CD4-positive, alpha-beta memory T cell (primary cell): ENCODE measurements at regions of chr11 and their contacts with region 1.

Region 1: GRCh38 chr11:58579192-58580129 is 598 bp downstream of the ZFP91 start:
- DNase-seq: peak; percentile 89 to 94 (median 90)
- H3K4me3 ChIP-seq: peak overlapping the region; percentile 63 to 81
- H3K4me3 Mint-ChIP-seq: peak overlapping the region; percentile 93 to 99 (median 98)
- H3K27ac ChIP-seq: peak overlapping the region; percentile 99
- H3K27ac Mint-ChIP-seq: peak overlapping the region; percentile 98 to 100 (median 100)
- H3K4me1 ChIP-seq: peaks cover 70% of the 10 kb centered on the region
- H3K4me1 Mint-ChIP-seq: peaks cover 37 to 86% (median 58%) of the 10 kb centered on the region in 4 donors
- H3K27me3 ChIP-seq: no peaks in the 10 kb centered on the region
- H3K27me3 Mint-ChIP-seq: peaks cover 0 to 3% of the 10 kb centered on the region in 2 donors

Region 2: DNA sequence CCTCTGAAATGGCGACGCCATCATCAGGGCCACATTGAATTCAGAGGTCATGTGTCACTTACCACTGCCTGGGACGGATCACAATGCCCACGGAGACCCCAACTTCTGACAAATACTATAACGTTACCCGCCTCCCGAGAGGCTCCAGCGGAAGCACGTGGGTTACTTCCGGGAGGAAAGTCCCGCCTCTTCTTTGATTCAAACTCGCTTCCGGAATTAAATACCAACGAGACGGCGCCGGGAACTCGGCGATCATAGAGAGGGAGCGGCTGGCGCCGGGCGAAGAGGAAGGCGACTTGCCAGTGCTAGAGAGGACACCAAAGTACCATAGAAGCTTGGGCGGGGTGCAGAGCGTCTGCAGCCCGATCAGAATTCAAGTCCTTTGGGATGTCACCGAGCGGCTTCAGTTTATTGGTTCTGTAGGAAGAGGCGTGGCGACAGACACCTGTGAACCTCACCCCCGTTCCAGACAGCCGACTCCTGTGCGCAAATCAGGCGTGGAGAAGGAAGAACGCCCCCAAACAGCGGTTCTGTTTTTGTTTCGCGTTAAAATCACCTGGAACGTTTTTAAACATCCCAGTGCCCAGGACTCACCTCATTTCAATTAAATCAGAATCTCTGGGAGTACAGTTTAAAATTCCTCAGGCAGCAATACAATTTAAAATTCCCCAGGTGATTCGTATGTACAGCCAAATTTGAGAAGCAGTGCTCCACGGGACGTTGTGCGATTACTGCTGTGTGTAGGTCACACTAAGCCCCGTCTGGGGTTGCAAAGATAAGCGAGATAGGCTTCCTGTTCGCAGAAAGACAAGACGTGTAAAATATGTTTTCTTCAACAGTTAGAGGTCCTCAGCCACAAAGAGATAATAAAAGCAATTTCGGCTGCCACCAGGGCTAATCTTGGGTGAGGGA is 1048.6 kb before region 1 on chr11 and contains the start of gene TIMM10:
- CTCF ChIA-PET with region 1: no interaction called
- POLR2A ChIA-PET with region 1: no interaction called
- intact Hi-C with region 1: loop called (anchors 1 kb)
- DNase-seq: peak; percentile 93 to 98 (median 96)
- H3K4me3 ChIP-seq: peak within 1 kb of the TSS; percentile 71 to 94
- H3K4me3 Mint-ChIP-seq: peak within 1 kb of the TSS; percentile 88 to 95 (median 90)
- H3K27ac ChIP-seq: peak within 1 kb of the TSS; percentile 88
- H3K27ac Mint-ChIP-seq: peak within 1 kb of the TSS; percentile 92 to 96 (median 95)
- H3K4me1 ChIP-seq: peaks cover 23% of the 10 kb centered on the region
- H3K4me1 Mint-ChIP-seq: peaks cover 9 to 34% (median 26%) of the 10 kb centered on the region in 4 donors
- H3K27me3 ChIP-seq: no peaks in the 10 kb centered on the region
- H3K27me3 Mint-ChIP-seq: no peaks in the 10 kb centered on the region
- total RNA-seq, gene TIMM10: 30.4 to 34.6 TPM

Region 3: DNA sequence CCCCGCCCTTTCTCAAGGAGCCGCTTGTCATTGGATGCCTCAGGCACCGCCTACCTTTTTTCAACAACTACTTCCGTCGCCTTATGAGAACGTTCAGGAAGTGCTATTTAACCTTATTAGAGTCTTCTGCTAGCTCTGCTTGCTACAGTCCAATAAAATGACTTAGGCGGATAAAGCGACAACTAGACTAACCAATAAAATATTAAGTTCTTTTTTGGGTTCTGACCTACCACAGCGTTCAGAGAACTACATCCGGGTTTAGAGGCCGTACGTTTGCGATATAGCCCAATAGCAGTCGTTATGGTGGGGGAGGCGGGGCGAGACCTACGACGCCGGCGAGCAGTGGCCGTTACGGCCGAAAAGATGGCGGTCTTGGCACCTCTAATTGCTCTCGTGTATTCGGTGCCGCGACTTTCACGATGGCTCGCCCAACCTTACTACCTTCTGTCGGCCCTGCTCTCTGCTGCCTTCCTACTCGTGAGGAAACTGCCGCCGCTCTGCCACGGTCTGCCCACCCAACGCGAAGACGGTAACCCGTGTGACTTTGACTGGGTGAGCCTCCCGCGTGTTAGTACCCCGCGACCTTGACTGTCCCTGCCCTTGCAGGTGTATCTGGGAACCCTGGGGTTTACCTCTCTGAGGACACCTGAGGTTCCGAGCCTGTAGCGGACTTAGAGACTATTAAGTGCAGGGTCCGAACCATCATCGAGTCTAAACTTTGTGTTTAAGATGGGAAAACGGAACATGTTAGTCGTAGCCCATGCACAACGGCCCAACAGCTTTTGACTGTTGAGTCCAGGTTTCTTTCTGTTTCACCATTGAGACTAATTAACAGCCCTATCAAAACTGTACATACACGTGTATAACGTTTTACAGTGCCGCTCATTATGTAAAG is 867.0 kb before region 1 on chr11 and contains the start of gene TMX2:
- CTCF ChIA-PET with region 1: no interaction called
- POLR2A ChIA-PET with region 1: interaction called, 3 read pairs
- intact Hi-C with region 1: loop called (anchors 1 kb)
- DNase-seq: peak; percentile 89 to 97 (median 94)
- H3K4me3 ChIP-seq: peak within 1 kb of the TSS; percentile 92 to 96
- H3K4me3 Mint-ChIP-seq: peak within 1 kb of the TSS; percentile 93 to 99 (median 98)
- H3K27ac ChIP-seq: peak within 1 kb of the TSS; percentile 96
- H3K27ac Mint-ChIP-seq: peak within 1 kb of the TSS; percentile 91 to 99 (median 98)
- H3K4me1 ChIP-seq: peaks cover 34% of the 10 kb centered on the region
- H3K4me1 Mint-ChIP-seq: peaks cover 30 to 64% (median 43%) of the 10 kb centered on the region in 4 donors
- H3K27me3 ChIP-seq: no peaks in the 10 kb centered on the region
- H3K27me3 Mint-ChIP-seq: no peaks in the 10 kb centered on the region
- total RNA-seq, gene TMX2: 63.6 to 67.1 TPM

Region 4: DNA sequence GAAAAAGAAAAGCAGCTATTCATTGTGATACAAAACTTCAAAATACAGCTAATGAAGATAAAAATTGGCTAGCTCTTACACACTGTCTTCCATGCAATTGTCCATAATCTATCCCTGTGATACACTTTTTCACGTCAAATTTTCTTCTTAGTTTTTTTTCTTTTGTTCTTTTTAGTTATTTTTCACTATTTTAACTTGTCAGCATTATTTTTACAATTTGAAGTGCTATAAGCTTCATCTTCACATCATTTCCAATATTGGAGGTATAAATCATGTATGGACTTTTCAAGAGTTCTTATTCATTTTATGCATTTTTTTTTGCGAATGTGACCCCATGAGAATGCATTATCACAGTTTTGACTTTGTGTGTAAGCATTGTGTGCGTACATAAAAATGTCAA is 224.7 kb before region 1 on chr11:
- CTCF ChIA-PET with region 1: no interaction called
- POLR2A ChIA-PET with region 1: no interaction called
- intact Hi-C with region 1: no loop called
- DNase-seq: no peak
- H3K4me3 ChIP-seq: no peak overlapping the region
- H3K4me3 Mint-ChIP-seq: no peak overlapping the region
- H3K27ac ChIP-seq: no peak overlapping the region
- H3K27ac Mint-ChIP-seq: no peak overlapping the region
- H3K4me1 ChIP-seq: no peaks in the 10 kb centered on the region
- H3K4me1 Mint-ChIP-seq: no peaks in the 10 kb centered on the region
- H3K27me3 ChIP-seq: no peaks in the 10 kb centered on the region
- H3K27me3 Mint-ChIP-seq: peaks cover 9 to 10% of the 10 kb centered on the region in 2 donors

Region 5: GRCh38 chr11:58562375-58562800 is 17.1 kb before region 1 on chr11:
- CTCF ChIA-PET with region 1: interaction called, 187 read pairs
- POLR2A ChIA-PET with region 1: interaction called, 109 read pairs
- intact Hi-C with region 1: loop called (anchors 2 kb)
- DNase-seq: peak in 4 of 5 donors; percentile 14 to 32 (median 24)
- H3K4me3 ChIP-seq: no peak overlapping the region
- H3K4me3 Mint-ChIP-seq: peak overlapping the region in 7 of 8 donors; percentile 41 to 76 (median 66)
- H3K27ac ChIP-seq: peak overlapping the region; percentile 15
- H3K27ac Mint-ChIP-seq: peak overlapping the region; percentile 41 to 95 (median 85)
- H3K4me1 ChIP-seq: peaks cover 72% of the 10 kb centered on the region
- H3K4me1 Mint-ChIP-seq: peaks cover 44 to 70% (median 48%) of the 10 kb centered on the region in 4 donors
- H3K27me3 ChIP-seq: no peaks in the 10 kb centered on the region
- H3K27me3 Mint-ChIP-seq: no peaks in the 10 kb centered on the region

Region 6: DNA sequence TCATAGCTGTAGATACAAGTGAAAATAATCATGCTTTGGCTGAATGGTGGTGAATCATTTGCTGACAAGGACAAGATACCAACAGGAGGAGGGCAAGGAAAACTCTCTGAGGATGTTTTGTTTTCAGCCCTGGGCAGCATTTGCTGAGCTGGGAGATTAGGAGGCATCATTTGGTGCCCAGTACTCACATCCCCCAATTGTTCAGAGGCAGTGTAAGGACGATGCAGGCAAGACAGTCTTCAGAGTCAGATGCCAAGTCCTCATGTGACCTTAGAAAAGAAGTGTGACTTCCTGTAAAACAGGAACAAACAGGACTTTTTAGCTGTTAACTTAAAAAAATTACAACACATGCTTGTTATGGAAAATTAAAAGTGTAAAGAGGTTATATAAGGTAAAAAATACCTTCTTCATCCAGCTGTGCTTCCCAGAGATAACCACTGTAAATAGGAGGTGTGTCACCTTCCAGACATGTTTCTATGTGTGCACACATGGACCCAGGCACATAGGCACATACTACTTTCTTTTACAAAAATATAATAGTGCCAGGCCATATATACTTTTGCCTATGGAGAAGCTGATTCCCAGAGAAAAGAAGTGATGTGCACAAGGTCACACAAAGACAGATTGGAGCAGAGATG is 61.0 kb after region 1 on chr11:
- CTCF ChIA-PET with region 1: no interaction called
- POLR2A ChIA-PET with region 1: interaction called, 10 read pairs
- intact Hi-C with region 1: no loop called
- DNase-seq: peak in 4 of 5 donors; percentile 16 to 29 (median 21)
- H3K4me3 ChIP-seq: no peak overlapping the region
- H3K4me3 Mint-ChIP-seq: peak overlapping the region in 7 of 8 donors; percentile 26 to 64 (median 33)
- H3K27ac ChIP-seq: no peak overlapping the region
- H3K27ac Mint-ChIP-seq: peak overlapping the region in 6 of 7 donors; percentile 29 to 85 (median 72)
- H3K4me1 ChIP-seq: peaks cover 21% of the 10 kb centered on the region
- H3K4me1 Mint-ChIP-seq: peaks cover 14 to 26% (median 18%) of the 10 kb centered on the region in 4 donors
- H3K27me3 ChIP-seq: no peaks in the 10 kb centered on the region
- H3K27me3 Mint-ChIP-seq: no peaks in the 10 kb centered on the region

Region 7: DNA sequence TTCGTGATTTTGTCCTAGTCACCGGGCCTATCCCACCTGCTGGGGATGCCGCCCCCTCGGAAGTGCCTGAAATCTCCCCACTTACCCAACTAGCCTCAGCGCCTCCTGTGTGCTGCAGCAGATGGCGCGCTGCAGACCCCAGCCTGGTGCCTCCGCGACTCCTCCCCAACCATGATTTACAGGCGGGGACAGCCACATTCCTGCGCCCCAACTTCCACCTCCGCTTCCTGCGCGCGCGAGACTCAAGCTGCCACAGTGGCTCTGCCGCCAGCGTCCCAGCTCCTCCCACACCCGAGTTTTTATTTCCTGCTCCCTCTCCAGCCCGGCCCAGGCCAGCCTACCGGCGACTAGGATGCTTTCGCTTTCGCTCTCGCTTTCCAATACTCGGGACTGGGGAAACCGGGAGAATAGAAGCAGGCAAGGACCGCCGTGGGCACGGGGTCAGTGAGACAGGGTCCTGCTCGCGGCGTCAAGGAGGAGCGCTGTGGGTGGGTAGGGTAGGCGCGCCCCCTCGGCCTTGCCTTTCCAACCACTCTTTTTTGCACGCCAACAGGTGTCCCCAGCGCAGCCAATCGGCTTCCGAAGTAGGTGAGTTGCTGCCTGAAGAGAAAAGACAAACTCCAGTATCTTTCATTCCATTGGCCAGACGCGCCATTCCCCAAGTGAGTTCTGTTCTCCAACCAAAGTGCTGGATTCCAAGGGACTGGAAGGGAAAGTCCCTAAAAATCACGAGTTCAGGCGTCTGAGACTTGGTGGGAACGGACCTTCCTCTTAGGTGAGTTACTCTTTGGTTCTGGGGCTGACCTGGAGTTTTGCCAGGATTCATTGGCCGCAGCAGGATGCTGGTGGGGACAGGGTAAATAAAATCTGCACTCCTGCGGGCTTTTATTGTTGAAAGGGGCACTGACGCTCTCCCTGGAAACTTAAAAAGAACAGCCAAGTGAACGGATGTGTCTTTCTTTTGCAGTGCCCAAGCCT is 563.4 kb after region 1 on chr11 and contains the start of gene FAM111A:
- CTCF ChIA-PET with region 1: no interaction called
- POLR2A ChIA-PET with region 1: interaction called, 11 read pairs
- intact Hi-C with region 1: loop called (anchors 2 kb)
- DNase-seq: peak; percentile 89 to 94 (median 90)
- H3K4me3 ChIP-seq: peak within 1 kb of the TSS; percentile 86 to 92
- H3K4me3 Mint-ChIP-seq: peak within 1 kb of the TSS; percentile 94 to 98 (median 97)
- H3K27ac ChIP-seq: peak within 1 kb of the TSS; percentile 87
- H3K27ac Mint-ChIP-seq: peak within 1 kb of the TSS; percentile 96 to 99 (median 98)
- H3K4me1 ChIP-seq: peaks cover 46% of the 10 kb centered on the region
- H3K4me1 Mint-ChIP-seq: peaks cover 39 to 60% (median 43%) of the 10 kb centered on the region in 4 donors
- H3K27me3 ChIP-seq: no peaks in the 10 kb centered on the region
- H3K27me3 Mint-ChIP-seq: no peaks in the 10 kb centered on the region
- total RNA-seq, gene FAM111A: 128 to 130 TPM

Region 8: DNA sequence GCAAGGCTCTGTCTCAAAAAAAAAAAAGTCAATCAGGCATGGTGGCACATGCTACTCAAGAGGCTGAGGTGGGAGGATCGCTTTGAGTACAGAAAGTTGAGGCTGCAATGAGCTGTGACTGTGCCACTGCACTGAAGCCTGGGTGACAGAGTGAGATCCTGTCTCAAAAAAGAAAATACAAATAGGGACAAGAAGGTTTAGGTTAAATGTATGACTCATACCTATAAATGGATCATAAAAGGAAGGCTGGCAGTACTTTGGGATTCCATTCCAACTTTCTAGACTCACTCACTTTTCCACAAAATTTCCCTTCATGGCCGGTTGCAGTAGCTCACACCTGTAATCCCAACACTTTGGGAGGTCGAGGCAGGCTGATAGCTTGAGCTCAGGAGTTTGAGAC is 1061.7 kb after region 1 on chr11:
- CTCF ChIA-PET with region 1: no interaction called
- POLR2A ChIA-PET with region 1: no interaction called
- intact Hi-C with region 1: no loop called
- DNase-seq: no peak
- H3K4me3 ChIP-seq: no peak overlapping the region
- H3K4me3 Mint-ChIP-seq: no peak overlapping the region
- H3K27ac ChIP-seq: no peak overlapping the region
- H3K27ac Mint-ChIP-seq: no peak overlapping the region
- H3K4me1 ChIP-seq: no peaks in the 10 kb centered on the region
- H3K4me1 Mint-ChIP-seq: no peaks in the 10 kb centered on the region
- H3K27me3 ChIP-seq: no peaks in the 10 kb centered on the region
- H3K27me3 Mint-ChIP-seq: no peaks in the 10 kb centered on the region